ENCODE measurements at regions of chr6 and their contacts with region 1.

Region 1: GRCh38 chr6:154386848-154387717 is 30.5 kb upstream of the IPCEF1 start:
- H3K4me3 ChIP-seq: no peak overlapping the region
- H3K27ac ChIP-seq: no peak overlapping the region
- H3K4me1 ChIP-seq: peaks cover 5% of the 10 kb centered on the region; the same call in 1 of the 2 replicates
- CTCF ChIP-seq: no peak

Region 2: DNA sequence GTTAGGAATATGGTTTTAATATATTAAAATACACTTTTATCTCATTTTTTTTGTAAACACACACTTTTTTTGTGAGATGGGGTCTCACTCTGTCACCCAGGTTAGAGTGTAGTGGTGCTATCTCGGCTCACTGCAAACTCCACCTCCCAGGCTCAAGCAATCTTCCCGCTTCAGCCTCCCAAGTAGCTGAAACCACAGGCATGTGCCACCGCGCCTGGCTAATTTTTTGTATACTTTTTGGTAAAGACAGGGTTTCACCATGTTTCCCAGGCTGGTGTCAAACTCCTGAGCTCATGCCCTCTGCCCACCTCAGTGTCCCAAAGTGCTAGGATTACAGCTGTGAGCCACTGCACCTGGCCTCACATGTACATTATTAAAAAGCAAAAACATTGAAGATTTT is 41.3 kb before region 1 on chr6:
- CTCF ChIA-PET with region 1: interaction called, 12 read pairs
- POLR2A ChIA-PET with region 1: no interaction called
- H3K4me3 ChIP-seq: no peak overlapping the region
- H3K27ac ChIP-seq: no peak overlapping the region
- H3K4me1 ChIP-seq: no peaks in the 10 kb centered on the region
- CTCF ChIP-seq: no peak

Region 3: GRCh38 chr6:154450208-154450873 is 63.3 kb after region 1 on chr6:
- CTCF ChIA-PET with region 1: no interaction called
- POLR2A ChIA-PET with region 1: no interaction called
- H3K4me3 ChIP-seq: no peak overlapping the region
- H3K27ac ChIP-seq: no peak overlapping the region
- H3K4me1 ChIP-seq: peaks cover 17% of the 10 kb centered on the region
- CTCF ChIP-seq: no peak

Measured in HEK293 (cell line).